B cell (primary cell): ENCODE measurements at regions of chr9 and their contacts with region 1.

Region 1: DNA sequence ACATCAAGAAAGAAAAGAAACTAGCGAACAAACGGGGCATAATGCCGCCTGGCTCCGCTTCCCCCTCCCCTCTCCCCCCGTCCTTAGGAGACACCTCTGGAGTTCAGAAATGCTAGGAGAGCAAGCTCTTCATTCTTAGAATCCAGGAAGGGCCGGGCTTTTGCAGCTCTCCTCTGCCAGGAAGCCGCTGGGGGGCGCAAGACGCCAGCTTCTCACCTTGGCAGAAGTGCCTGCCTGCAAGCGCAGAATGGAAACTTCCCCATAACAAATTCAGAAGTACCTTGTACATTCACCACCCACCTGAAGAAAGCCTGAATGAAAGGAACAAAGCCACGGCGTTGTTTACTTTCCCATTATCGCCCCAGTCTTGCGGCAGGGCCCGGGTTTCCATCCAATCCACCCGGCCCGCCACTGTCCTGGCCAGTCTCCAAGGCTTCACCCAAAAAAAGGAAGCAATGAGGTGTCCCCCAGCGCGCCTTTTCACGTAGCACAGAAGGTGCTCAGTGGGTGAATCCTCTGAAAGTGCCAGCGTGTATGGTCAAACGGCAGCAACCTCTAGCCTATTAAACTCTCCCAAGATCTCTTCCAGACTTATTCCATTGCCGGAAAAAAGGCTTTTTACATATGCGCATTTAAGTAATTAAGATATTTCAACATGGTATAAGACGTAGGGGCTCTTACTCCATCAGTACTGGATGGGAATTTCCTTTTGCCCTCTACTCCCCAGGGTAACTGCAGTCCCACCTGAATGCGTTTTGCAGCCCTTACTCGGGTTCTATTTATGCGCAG is 1.6 kb upstream of the GADD45G start:
- DNase-seq: peak; percentile 90
- ATAC-seq: peak; percentile 44
- H3K4me3 ChIP-seq: peak overlapping the region; percentile 50 to 72 (median 58)
- H3K4me3 Mint-ChIP-seq: peak overlapping the region; percentile 83
- H3K27ac ChIP-seq: no peak overlapping the region
- H3K27ac Mint-ChIP-seq: peak overlapping the region; percentile 44
- H3K4me1 ChIP-seq: peaks cover 21 to 39% of the 10 kb centered on the region in 2 donors
- H3K4me1 Mint-ChIP-seq: peaks cover 32% of the 10 kb centered on the region
- H3K27me3 ChIP-seq: peaks cover 0 to 39% (median 16%) of the 10 kb centered on the region in 4 experiments
- H3K27me3 Mint-ChIP-seq: peaks cover 13% of the 10 kb centered on the region
- CTCF ChIP-seq: peak; percentile 79

Region 2: DNA sequence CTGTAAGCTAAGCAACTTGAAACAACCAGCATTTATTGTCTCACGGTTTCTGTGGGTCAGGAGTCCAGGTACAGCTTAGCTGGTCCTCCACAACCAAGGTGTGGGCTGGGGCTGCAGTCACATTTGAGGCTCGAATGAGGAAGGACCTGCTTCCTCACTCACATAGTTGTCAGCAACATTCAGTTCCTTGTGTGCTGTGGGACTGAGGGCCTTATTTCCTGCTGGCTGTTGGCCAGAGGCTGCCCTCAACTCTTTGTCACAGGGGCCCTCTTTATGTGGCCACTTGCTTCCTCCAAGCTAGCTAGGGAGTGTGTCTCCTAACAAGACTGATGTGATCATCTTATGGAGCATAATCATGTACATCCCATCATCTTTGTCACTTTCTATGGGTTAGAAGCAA is 76.1 kb before region 1 on chr9:
- CTCF ChIA-PET with region 1: no interaction called
- POLR2A ChIA-PET with region 1: no interaction called
- intact Hi-C with region 1: no loop called
- DNase-seq: no peak
- ATAC-seq: no peak
- H3K4me3 ChIP-seq: peak overlapping the region in 1 of 5 experiments; percentile 3
- H3K4me3 Mint-ChIP-seq: no peak overlapping the region
- H3K27ac ChIP-seq: no peak overlapping the region
- H3K27ac Mint-ChIP-seq: peak overlapping the region; percentile 32
- H3K4me1 ChIP-seq: peaks cover 28 to 48% of the 10 kb centered on the region in 2 donors
- H3K4me1 Mint-ChIP-seq: peaks cover 42% of the 10 kb centered on the region
- H3K27me3 ChIP-seq: no peaks in the 10 kb centered on the region
- H3K27me3 Mint-ChIP-seq: no peaks in the 10 kb centered on the region
- CTCF ChIP-seq: no peak

Region 3: DNA sequence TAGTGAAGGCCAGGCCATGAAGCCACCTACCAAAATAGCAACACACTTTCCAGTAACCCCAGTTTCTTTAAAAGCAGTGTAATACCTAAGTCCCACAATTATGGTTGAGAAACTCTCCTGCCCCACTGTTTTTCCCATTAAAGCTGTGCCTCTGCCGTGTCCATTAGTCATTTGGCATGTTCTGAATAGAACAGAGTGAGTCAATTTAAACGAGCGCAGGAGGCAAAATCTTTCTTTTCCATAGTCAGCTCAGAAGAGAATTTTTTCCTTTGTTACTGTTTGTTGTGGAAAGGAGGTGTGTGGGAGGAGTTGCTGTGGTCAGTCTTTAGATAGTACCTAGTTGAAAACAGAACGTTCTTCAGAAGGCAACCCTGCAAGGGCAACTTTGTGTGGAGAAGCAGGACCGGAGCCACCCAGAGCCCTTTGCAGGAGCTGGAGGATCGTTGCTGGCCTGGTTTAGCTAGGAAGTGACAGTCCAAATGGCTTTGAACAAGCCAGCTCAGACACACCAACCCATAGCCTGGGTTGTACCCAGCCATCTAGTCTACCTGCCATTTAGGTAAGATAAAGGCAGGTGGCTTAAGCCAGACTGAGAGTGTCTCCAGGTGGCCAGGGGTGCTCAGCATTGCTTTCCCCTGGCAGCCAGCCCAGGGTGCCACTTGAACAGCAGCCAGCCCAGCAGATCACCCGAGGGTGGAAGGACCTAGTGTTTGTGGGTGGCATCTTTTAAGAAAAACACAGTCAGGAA is 32.0 kb after region 1 on chr9:
- CTCF ChIA-PET with region 1: no interaction called
- POLR2A ChIA-PET with region 1: no interaction called
- intact Hi-C with region 1: no loop called
- DNase-seq: no peak
- ATAC-seq: no peak
- H3K4me3 ChIP-seq: no peak overlapping the region
- H3K4me3 Mint-ChIP-seq: no peak overlapping the region
- H3K27ac ChIP-seq: no peak overlapping the region
- H3K27ac Mint-ChIP-seq: no peak overlapping the region
- H3K4me1 ChIP-seq: no peaks in the 10 kb centered on the region
- H3K4me1 Mint-ChIP-seq: no peaks in the 10 kb centered on the region
- H3K27me3 ChIP-seq: peaks cover 0 to 2% (median 0%) of the 10 kb centered on the region in 4 experiments
- H3K27me3 Mint-ChIP-seq: no peaks in the 10 kb centered on the region
- CTCF ChIP-seq: no peak

Region 4: DNA sequence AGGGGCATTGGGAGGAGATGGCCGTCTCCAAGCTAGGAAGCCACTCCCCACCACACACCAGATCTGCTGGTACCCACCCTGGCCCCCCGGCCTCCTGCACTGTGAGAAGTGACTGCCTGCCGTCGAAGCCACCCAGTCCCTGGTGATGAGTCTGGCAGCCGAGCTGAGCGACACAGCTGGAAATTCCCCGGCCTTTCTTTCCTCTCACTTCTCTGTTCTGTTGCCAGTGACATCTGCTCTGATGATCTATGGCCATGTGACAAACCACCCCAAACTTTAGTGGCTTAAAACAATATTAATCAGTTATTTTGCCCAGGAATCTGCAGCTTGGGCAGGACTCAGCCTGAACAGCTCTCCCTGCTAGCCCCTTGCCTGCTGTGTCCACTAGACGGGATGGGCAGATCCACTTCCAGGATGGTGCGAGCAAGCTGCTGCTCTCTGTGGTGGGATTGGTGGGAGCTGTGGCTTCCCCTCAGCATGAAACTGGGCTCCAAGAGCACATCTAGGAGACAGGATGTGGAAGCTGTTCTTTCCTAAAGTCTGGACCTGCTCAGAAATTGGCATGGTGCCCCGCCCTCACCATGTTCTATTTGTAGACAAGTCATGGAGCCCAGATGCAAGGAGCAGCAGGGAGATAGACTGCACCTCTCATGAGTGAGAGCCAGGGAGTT is 212.9 kb after region 1 on chr9:
- CTCF ChIA-PET with region 1: interaction called, 10 read pairs
- POLR2A ChIA-PET with region 1: no interaction called
- intact Hi-C with region 1: loop called (anchors 10 kb)
- DNase-seq: peak; percentile 92
- ATAC-seq: peak; percentile 96
- H3K4me3 ChIP-seq: no peak overlapping the region
- H3K4me3 Mint-ChIP-seq: peak overlapping the region; percentile 43
- H3K27ac ChIP-seq: peak overlapping the region; percentile 75 to 84
- H3K27ac Mint-ChIP-seq: peak overlapping the region; percentile 79
- H3K4me1 ChIP-seq: peaks cover 36 to 39% of the 10 kb centered on the region in 2 donors
- H3K4me1 Mint-ChIP-seq: peaks cover 52% of the 10 kb centered on the region
- H3K27me3 ChIP-seq: no peaks in the 10 kb centered on the region
- H3K27me3 Mint-ChIP-seq: no peaks in the 10 kb centered on the region
- CTCF ChIP-seq: no peak

Region 5: GRCh38 chr9:90025816-90026215 is 422.6 kb after region 1 on chr9:
- CTCF ChIA-PET with region 1: interaction called, 5 read pairs
- POLR2A ChIA-PET with region 1: no interaction called
- intact Hi-C with region 1: loop called (anchors 5 kb)
- DNase-seq: peak; percentile 35
- ATAC-seq: no peak
- H3K4me3 ChIP-seq: no peak overlapping the region
- H3K4me3 Mint-ChIP-seq: no peak overlapping the region
- H3K27ac ChIP-seq: no peak overlapping the region
- H3K27ac Mint-ChIP-seq: peak overlapping the region; percentile 53
- H3K4me1 ChIP-seq: peaks cover 56 to 57% of the 10 kb centered on the region in 2 donors
- H3K4me1 Mint-ChIP-seq: peaks cover 56% of the 10 kb centered on the region
- H3K27me3 ChIP-seq: no peaks in the 10 kb centered on the region
- H3K27me3 Mint-ChIP-seq: no peaks in the 10 kb centered on the region
- CTCF ChIP-seq: no peak

Region 6: GRCh38 chr9:90102292-90102901 is 499.2 kb after region 1 on chr9:
- CTCF ChIA-PET with region 1: interaction called, 406 read pairs
- POLR2A ChIA-PET with region 1: interaction called, 4 read pairs
- intact Hi-C with region 1: loop called (anchors 1 kb)
- DNase-seq: peak; percentile 90
- ATAC-seq: peak; percentile 100
- H3K4me3 ChIP-seq: no peak overlapping the region
- H3K4me3 Mint-ChIP-seq: no peak overlapping the region
- H3K27ac ChIP-seq: no peak overlapping the region
- H3K27ac Mint-ChIP-seq: no peak overlapping the region
- H3K4me1 ChIP-seq: peaks cover 3 to 6% of the 10 kb centered on the region in 2 donors
- H3K4me1 Mint-ChIP-seq: peaks cover 6% of the 10 kb centered on the region
- H3K27me3 ChIP-seq: no peaks in the 10 kb centered on the region
- H3K27me3 Mint-ChIP-seq: no peaks in the 10 kb centered on the region
- CTCF ChIP-seq: peak; percentile 85

Region 7: DNA sequence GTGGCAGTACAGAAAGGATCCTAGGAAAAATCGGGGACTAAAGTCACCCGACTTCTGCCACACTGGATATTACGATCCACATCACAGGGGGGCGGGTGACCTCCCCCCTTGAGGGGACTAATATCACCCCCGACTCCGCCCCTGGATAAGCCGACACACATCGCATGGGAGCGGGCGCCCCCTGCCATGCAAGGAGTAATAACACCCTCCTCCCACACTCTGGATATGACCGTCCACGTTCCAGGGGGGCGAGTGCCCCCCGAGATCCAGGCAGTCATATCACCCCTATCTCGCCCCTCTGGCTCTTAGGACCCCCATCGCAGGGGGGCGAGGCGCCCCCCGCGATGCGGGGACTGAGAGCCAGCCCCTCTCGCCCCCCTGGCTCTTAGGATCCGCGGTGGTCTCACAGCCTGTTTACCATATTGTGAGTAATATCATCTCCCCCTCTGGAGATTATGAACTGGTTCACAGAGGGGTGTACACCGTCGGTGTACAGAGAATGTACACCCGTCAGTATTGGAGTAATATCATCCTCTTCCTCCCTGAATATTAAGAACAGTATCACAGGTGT is 616.5 kb after region 1 on chr9:
- CTCF ChIA-PET with region 1: interaction called, 3 read pairs
- POLR2A ChIA-PET with region 1: no interaction called
- intact Hi-C with region 1: loop called (anchors 1 kb)
- DNase-seq: peak; percentile 72
- ATAC-seq: peak; percentile 89
- H3K4me3 ChIP-seq: peak overlapping the region in 2 of 5 experiments; percentile 27 to 33
- H3K4me3 Mint-ChIP-seq: peak overlapping the region; percentile 18
- H3K27ac ChIP-seq: no peak overlapping the region
- H3K27ac Mint-ChIP-seq: no peak overlapping the region
- H3K4me1 ChIP-seq: peaks cover 6 to 7% of the 10 kb centered on the region in 2 donors
- H3K4me1 Mint-ChIP-seq: peaks cover 7% of the 10 kb centered on the region
- H3K27me3 ChIP-seq: no peaks in the 10 kb centered on the region
- H3K27me3 Mint-ChIP-seq: no peaks in the 10 kb centered on the region
- CTCF ChIP-seq: peak; percentile 80